ENCODE measurements at regions of chr2 and their contacts with region 1.

Region 1: GRCh38 chr2:170409164-170409535 is 231.2 kb downstream of the MYO3B start:
- DNase-seq: peak; percentile 46 to 80 (median 69)
- ATAC-seq: peak; percentile 86
- H3K4me3 ChIP-seq: no peak overlapping the region
- H3K4me3 Mint-ChIP-seq: peak overlapping the region in 8 of 10 donors; percentile 61 to 80 (median 64)
- H3K27ac ChIP-seq: no peak overlapping the region
- H3K27ac Mint-ChIP-seq: peak overlapping the region in 2 of 9 donors; percentile 43 to 44
- H3K4me1 ChIP-seq: peaks cover 0 to 6% of the 10 kb centered on the region in 2 donors
- H3K4me1 Mint-ChIP-seq: peaks cover 5 to 15% (median 11%) of the 10 kb centered on the region in 7 donors
- H3K27me3 ChIP-seq: no peaks in the 10 kb centered on the region
- H3K27me3 Mint-ChIP-seq: peaks cover 24 to 32% (median 32%) of the 10 kb centered on the region in 5 donors

Region 2: GRCh38 chr2:169916623-169917022 is 492.5 kb before region 1 on chr2:
- CTCF ChIA-PET with region 1: no interaction called
- POLR2A ChIA-PET with region 1: no interaction called
- intact Hi-C with region 1: no loop called
- DNase-seq: no peak
- ATAC-seq: no peak
- H3K4me3 ChIP-seq: no peak overlapping the region
- H3K4me3 Mint-ChIP-seq: no peak overlapping the region
- H3K27ac ChIP-seq: no peak overlapping the region
- H3K27ac Mint-ChIP-seq: peak overlapping the region in 3 of 9 donors; percentile 17 to 38 (median 28)
- H3K4me1 ChIP-seq: no peaks in the 10 kb centered on the region
- H3K4me1 Mint-ChIP-seq: peaks cover 0 to 10% (median 2%) of the 10 kb centered on the region in 7 donors
- H3K27me3 ChIP-seq: no peaks in the 10 kb centered on the region
- H3K27me3 Mint-ChIP-seq: no peaks in the 10 kb centered on the region

Region 3: GRCh38 chr2:170324640-170325046 is 84.5 kb before region 1 on chr2:
- CTCF ChIA-PET with region 1: no interaction called
- POLR2A ChIA-PET with region 1: no interaction called
- intact Hi-C with region 1: loop called (anchors 2 kb)
- DNase-seq: peak in 8 of 9 donors; percentile 5 to 57 (median 34)
- ATAC-seq: peak; percentile 31
- H3K4me3 ChIP-seq: no peak overlapping the region
- H3K4me3 Mint-ChIP-seq: no peak overlapping the region
- H3K27ac ChIP-seq: no peak overlapping the region
- H3K27ac Mint-ChIP-seq: no peak overlapping the region
- H3K4me1 ChIP-seq: no peaks in the 10 kb centered on the region
- H3K4me1 Mint-ChIP-seq: peaks cover 0 to 2% (median 0%) of the 10 kb centered on the region in 7 donors
- H3K27me3 ChIP-seq: no peaks in the 10 kb centered on the region
- H3K27me3 Mint-ChIP-seq: peaks cover 0 to 7% (median 3%) of the 10 kb centered on the region in 5 donors

Region 4: DNA sequence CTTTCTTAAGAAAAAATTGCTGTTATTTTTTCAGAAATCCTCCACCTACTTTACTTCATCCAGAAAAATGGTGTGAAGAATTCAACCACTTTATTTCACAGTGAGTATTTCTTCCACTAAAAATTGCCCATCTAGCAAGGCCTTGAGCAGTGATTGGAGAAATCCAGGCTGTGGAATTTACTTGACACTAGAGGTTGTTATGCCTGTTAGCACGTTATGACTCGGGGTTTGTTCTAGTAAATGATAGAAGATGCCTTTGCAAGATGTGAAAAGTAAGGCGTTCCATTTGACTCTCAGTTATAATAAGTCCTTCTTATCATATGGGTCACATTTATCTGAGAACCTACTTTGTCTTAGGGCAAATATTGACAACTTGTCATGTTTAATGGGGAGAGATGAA is 73.8 kb before region 1 on chr2:
- CTCF ChIA-PET with region 1: no interaction called
- POLR2A ChIA-PET with region 1: no interaction called
- intact Hi-C with region 1: no loop called
- DNase-seq: no peak
- ATAC-seq: no peak
- H3K4me3 ChIP-seq: no peak overlapping the region
- H3K4me3 Mint-ChIP-seq: no peak overlapping the region
- H3K27ac ChIP-seq: no peak overlapping the region
- H3K27ac Mint-ChIP-seq: no peak overlapping the region
- H3K4me1 ChIP-seq: no peaks in the 10 kb centered on the region
- H3K4me1 Mint-ChIP-seq: peaks cover 0 to 16% (median 0%) of the 10 kb centered on the region in 7 donors
- H3K27me3 ChIP-seq: no peaks in the 10 kb centered on the region
- H3K27me3 Mint-ChIP-seq: peaks cover 25 to 41% (median 31%) of the 10 kb centered on the region in 5 donors

Region 5: DNA sequence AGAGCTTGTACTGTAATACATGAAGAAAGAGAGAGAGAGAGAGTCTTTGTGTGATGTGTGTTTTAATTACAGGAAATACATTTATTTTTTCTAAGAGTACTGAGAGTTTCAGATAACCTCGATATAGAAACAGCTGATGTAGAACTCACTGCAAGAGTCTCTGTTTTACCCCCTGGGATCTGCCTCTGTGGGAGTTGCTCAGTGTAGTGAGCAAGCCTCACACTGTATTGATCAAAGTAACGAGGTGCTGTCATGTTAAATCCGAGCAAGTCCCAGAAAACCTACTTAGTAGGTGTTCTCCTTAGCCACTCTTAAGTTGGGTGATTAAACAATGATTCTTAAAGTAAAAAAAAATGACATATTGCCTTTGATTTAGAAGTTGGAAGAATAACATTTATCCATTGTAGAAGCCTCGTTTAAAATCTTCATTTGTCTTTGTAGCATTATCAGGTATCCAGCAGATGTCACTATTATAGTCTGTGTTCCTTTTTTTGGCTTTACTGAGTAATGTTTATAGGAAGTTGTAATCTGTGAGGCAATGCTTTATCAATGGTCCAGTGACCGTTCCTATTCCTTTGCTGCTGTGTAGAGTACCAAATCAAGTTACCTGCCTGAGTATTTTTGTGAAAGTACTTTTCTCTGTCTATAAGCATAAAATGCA is 12.2 kb before region 1 on chr2:
- CTCF ChIA-PET with region 1: interaction called, 12 read pairs
- POLR2A ChIA-PET with region 1: interaction called, 3 read pairs
- intact Hi-C with region 1: no loop called
- DNase-seq: peak in 2 of 9 donors; percentile 10 to 15
- ATAC-seq: no peak
- H3K4me3 ChIP-seq: no peak overlapping the region
- H3K4me3 Mint-ChIP-seq: no peak overlapping the region
- H3K27ac ChIP-seq: no peak overlapping the region
- H3K27ac Mint-ChIP-seq: no peak overlapping the region
- H3K4me1 ChIP-seq: no peaks in the 10 kb centered on the region
- H3K4me1 Mint-ChIP-seq: peaks cover 0 to 8% (median 0%) of the 10 kb centered on the region in 7 donors
- H3K27me3 ChIP-seq: no peaks in the 10 kb centered on the region
- H3K27me3 Mint-ChIP-seq: peaks cover 33 to 64% (median 43%) of the 10 kb centered on the region in 5 donors

Region 6: GRCh38 chr2:170707821-170708795 is 299.0 kb after region 1 on chr2:
- CTCF ChIA-PET with region 1: no interaction called
- POLR2A ChIA-PET with region 1: no interaction called
- intact Hi-C with region 1: loop called in 1 of 2 experiments (anchors 1 kb)
- DNase-seq: no peak
- ATAC-seq: no peak
- H3K4me3 ChIP-seq: no peak overlapping the region
- H3K4me3 Mint-ChIP-seq: no peak overlapping the region
- H3K27ac ChIP-seq: no peak overlapping the region
- H3K27ac Mint-ChIP-seq: no peak overlapping the region
- H3K4me1 ChIP-seq: peaks cover 0 to 17% of the 10 kb centered on the region in 2 donors
- H3K4me1 Mint-ChIP-seq: peaks cover 0 to 32% (median 19%) of the 10 kb centered on the region in 7 donors
- H3K27me3 ChIP-seq: peaks cover 0 to 12% of the 10 kb centered on the region in 2 donors
- H3K27me3 Mint-ChIP-seq: peaks cover 41 to 81% (median 56%) of the 10 kb centered on the region in 5 donors

Region 7: GRCh38 chr2:171086352-171087290 is 677.5 kb after region 1 on chr2:
- CTCF ChIA-PET with region 1: no interaction called
- POLR2A ChIA-PET with region 1: no interaction called
- intact Hi-C with region 1: no loop called
- DNase-seq: peak in 8 of 9 donors; percentile 34 to 76 (median 71)
- ATAC-seq: peak; percentile 82
- H3K4me3 ChIP-seq: peak overlapping the region; percentile 34
- H3K4me3 Mint-ChIP-seq: peak overlapping the region; percentile 69 to 92 (median 82)
- H3K27ac ChIP-seq: peak overlapping the region; percentile 71
- H3K27ac Mint-ChIP-seq: peak overlapping the region; percentile 86 to 99 (median 95)
- H3K4me1 ChIP-seq: peaks cover 7 to 68% of the 10 kb centered on the region in 2 donors
- H3K4me1 Mint-ChIP-seq: peaks cover 45 to 86% (median 76%) of the 10 kb centered on the region in 7 donors
- H3K27me3 ChIP-seq: no peaks in the 10 kb centered on the region
- H3K27me3 Mint-ChIP-seq: no peaks in the 10 kb centered on the region

Region 8: GRCh38 chr2:171939058-171939742 is 1530.0 kb after region 1 on chr2:
- CTCF ChIA-PET with region 1: no interaction called
- POLR2A ChIA-PET with region 1: no interaction called
- intact Hi-C with region 1: no loop called
- DNase-seq: no peak
- ATAC-seq: no peak
- H3K4me3 ChIP-seq: no peak overlapping the region
- H3K4me3 Mint-ChIP-seq: no peak overlapping the region
- H3K27ac ChIP-seq: no peak overlapping the region
- H3K27ac Mint-ChIP-seq: no peak overlapping the region
- H3K4me1 ChIP-seq: no peaks in the 10 kb centered on the region
- H3K4me1 Mint-ChIP-seq: peaks cover 25 to 61% (median 37%) of the 10 kb centered on the region in 7 donors
- H3K27me3 ChIP-seq: no peaks in the 10 kb centered on the region
- H3K27me3 Mint-ChIP-seq: no peaks in the 10 kb centered on the region